ENCODE measurements at regions of chr12 and their contacts with region 1.

Region 1: DNA sequence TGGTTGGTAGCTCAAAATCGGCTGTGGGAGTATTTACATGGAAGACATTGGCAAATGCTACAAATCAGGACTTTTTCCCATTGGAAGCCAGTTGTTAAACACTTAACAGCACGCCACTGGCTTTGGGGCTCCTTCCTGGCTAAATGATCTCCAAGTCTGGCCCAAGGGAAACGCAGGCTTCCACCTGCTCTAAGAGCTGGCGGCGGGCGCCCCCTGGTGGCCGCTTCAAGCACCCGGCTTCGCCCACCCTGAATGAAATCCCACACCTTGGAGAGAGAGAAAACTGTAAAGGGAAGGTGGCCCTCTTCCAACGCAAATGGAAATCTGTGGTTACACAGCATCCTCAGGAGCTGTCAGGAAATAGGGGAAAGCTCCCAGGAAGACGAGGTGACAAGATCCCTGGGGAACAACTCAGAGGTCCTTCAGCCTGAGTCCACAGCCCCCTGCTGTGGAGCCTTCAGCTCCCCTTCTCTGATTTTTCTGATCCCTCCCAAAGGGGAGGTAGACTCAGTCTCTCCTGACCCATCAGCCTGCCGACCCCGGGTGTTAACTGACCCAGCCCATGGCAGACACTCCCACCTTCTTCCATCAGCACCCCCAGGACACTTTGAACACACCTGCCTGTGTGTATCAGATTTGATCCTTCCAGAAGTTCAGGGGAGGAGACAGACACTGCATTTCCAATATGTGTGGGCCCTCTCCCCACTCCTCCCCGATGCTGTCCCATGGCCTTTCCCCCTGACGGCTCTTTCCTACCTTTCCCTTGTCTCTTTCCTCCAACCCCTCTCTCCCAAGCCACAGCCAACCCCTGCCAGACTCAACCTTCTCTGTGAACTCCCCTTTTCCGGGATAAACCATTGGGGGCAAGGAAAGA is 15.4 kb downstream of the SELPLG start:
- DNase-seq: peak; percentile 83
- CTCF ChIP-seq: peak; percentile 91

Region 2: DNA sequence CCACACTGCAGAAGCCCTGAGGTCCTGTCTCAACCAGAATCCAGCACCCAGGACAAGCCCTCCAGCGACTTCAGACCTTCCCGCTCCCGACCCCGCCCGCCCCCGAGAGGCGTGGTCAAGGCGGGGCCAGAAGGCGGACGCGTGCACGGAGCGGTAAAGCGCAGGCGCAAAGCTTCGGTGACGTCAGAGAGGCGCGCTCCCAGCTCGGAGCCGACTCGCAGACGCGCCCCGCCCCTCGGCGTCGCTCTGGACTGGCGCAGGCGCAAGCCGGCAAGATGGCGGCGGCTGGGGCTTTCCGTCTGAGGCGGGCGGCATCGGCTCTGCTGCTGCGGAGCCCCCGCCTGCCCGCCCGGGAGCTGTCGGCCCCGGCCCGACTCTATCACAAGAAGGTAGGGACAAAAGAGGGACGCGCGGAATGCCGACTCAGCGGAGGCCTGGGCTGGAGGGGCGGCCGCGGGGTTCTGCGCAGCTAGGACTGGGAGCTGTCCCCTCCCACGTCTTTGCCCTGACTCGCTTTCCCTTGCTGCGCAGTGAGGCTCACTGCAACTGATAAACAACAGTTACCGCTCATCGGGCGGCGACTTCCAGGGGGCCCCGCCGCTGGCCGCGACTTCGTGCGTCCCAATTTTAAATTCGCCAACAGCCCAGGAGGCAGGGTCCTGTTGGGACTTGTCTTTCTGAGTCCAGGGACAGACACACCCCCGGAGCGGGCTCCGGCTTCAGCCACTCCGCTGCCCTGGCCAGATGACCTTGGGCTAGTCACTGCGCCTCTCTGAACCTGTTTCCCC is 55.8 kb before region 1 on chr12 and contains the start of gene ISCU:
- in situ Hi-C with region 1: loop called (anchors 5 kb)
- DNase-seq: peak; percentile 98
- CTCF ChIP-seq: no peak